GM12878 (cell line): ENCODE measurements at regions of chr12 and their contacts with region 1.

Region 1: DNA sequence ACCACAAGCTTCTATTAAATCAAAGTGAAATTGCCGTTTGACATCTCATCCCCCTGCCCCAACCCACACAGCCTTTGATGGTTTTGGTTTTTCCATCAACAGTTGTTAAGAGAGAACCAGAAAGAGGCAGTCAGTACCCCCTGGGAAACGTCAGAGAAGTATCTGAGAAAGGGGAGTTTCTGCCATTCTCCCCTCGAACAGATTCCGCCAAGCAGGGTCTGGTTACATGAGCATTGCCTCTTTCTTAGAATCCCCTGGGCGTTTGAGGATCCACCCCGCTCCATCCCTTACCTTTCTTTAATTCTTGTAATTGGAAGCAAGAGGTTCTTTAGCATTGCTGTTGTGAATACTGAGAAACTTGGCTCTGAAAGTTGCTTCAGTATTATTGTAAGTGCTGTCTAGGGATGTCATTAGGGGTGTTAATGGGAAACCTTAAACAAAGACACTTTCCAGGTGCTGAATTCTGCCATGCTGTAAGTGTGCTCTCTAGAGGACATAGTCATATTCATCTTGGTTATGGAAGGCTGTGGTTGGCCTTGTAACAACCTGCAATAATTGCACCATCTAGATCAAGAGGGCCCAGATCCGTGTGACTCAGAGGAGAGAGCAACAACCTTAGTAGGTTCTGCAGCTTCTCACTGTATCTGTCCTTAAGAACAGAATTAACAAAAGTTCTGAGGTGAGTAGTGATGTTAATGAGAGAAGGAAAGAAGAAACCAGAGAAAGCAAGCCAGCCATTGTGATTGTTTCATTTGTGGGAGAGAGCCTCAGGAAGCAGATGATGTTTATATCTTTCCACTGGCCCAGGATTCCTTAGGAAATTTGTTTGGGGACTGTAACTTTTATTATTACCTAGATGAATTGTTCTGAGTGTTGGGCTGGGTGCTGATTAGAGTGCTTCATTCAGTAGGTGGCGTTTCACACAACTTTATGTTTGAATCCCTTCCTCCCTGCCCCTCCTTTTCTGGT is 9.0 kb downstream of the TMBIM6 start:
- DNase-seq: peak; percentile 36
- ATAC-seq: peak; percentile 81
- H3K4me3 ChIP-seq: peak overlapping the region; percentile 48
- H3K27ac ChIP-seq: peak overlapping the region; percentile 27
- H3K4me1 ChIP-seq: peaks cover 46% of the 10 kb centered on the region
- H3K27me3 ChIP-seq: no peaks in the 10 kb centered on the region
- CTCF ChIP-seq: peak in 2 of 3 experiments; percentile 6 to 29; a peak in 2 of 6 replicates
- EP300 ChIP-seq: peak in 1 of 2 experiments; percentile 31; a peak in 2 of 4 replicates
- POLR2A ChIP-seq: no peak
- RAD21 ChIP-seq: peak; percentile 30; the same call in 1 of the 2 replicates

Region 2: GRCh38 chr12:48651681-48652080 is 1098.6 kb before region 1 on chr12:
- CTCF ChIA-PET with region 1: no interaction called
- POLR2A ChIA-PET with region 1: no interaction called
- RAD21 ChIA-PET with region 1: no interaction called
- SMC1A ChIA-PET with region 1: no interaction called
- in situ Hi-C with region 1: no loop called
- intact Hi-C with region 1: no loop called
- DNase-seq: no peak
- ATAC-seq: no peak
- H3K4me3 ChIP-seq: no peak overlapping the region
- H3K27ac ChIP-seq: no peak overlapping the region
- H3K4me1 ChIP-seq: no peaks in the 10 kb centered on the region
- H3K27me3 ChIP-seq: no peaks in the 10 kb centered on the region
- CTCF ChIP-seq: no peak
- EP300 ChIP-seq: no peak
- POLR2A ChIP-seq: no peak
- RAD21 ChIP-seq: no peak

Region 3: DNA sequence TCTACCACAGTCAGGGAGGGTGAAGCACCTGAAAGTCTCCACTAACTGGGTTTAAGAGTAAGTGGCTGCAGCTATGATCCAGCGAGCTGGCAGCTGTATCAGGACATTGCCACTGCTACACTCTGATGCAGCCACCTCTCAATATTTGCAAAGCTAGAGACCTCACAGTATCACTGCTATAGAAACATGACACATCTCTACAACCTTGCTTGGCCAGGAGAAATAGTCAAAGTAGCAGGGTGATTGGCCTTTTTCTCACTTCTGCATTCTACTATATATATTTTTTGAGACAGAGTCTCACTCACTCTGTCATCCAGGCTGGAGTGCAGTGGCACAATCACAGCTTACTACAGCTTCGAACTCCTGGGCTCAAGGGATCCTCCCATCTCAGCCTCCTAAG is 33.8 kb before region 1 on chr12:
- CTCF ChIA-PET with region 1: interaction called, 13 read pairs
- POLR2A ChIA-PET with region 1: no interaction called
- RAD21 ChIA-PET with region 1: no interaction called
- SMC1A ChIA-PET with region 1: interaction called, 5 read pairs
- in situ Hi-C with region 1: no loop called
- intact Hi-C with region 1: no loop called
- DNase-seq: no peak
- ATAC-seq: peak; percentile 95
- H3K4me3 ChIP-seq: no peak overlapping the region
- H3K27ac ChIP-seq: no peak overlapping the region
- H3K4me1 ChIP-seq: peaks cover 9% of the 10 kb centered on the region
- H3K27me3 ChIP-seq: peaks cover 0 to 2% of the 10 kb centered on the region in 2 experiments; a peak in 1 of 4 replicates
- CTCF ChIP-seq: no peak
- EP300 ChIP-seq: no peak
- POLR2A ChIP-seq: no peak
- RAD21 ChIP-seq: no peak

Region 4: GRCh38 chr12:49763006-49763591 is 12.8 kb after region 1 on chr12:
- CTCF ChIA-PET with region 1: interaction called, 33 read pairs
- POLR2A ChIA-PET with region 1: interaction called, 7 read pairs
- RAD21 ChIA-PET with region 1: interaction called, 5 read pairs
- SMC1A ChIA-PET with region 1: interaction called, 16 read pairs
- in situ Hi-C with region 1: no loop called
- intact Hi-C with region 1: no loop called
- DNase-seq: no peak
- ATAC-seq: peak; percentile 85
- H3K4me3 ChIP-seq: no peak overlapping the region
- H3K27ac ChIP-seq: peak overlapping the region; percentile 30
- H3K4me1 ChIP-seq: peaks cover 26% of the 10 kb centered on the region
- H3K27me3 ChIP-seq: no peaks in the 10 kb centered on the region
- CTCF ChIP-seq: peak; percentile 59 to 88 (median 82)
- EP300 ChIP-seq: no peak
- POLR2A ChIP-seq: no peak
- RAD21 ChIP-seq: peak; percentile 47